ENCODE measurements at regions of chr16 and their contacts with region 1.

Region 1: DNA sequence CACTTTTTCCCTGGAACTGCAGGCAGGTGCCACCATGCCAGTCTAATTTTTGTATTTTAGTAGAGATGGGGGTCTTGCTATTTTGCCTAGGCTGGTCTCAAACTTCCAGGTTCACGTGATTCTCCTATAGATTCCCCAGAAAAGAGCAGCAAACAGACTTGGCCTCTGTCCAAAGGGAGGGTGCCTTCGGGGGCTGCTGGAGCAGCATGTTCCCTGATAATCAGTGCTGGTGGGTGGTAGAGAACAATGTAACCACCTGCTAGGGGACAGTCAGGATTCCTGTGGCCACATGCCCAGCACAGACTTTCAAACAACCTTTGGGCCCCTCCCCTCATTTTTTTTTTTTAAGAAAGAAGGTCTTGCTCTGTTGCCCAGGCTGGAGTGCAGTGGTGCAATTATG is 14.2 kb upstream of the CCNF start:
- DNase-seq: no peak
- ATAC-seq: no peak
- H3K4me3 ChIP-seq: no peak overlapping the region
- H3K27ac ChIP-seq: no peak overlapping the region
- H3K4me1 ChIP-seq: no peaks in the 10 kb centered on the region
- H3K27me3 ChIP-seq: peaks cover 0 to 30% (median 6%) of the 10 kb centered on the region in 9 donors
- CTCF ChIP-seq: no peak
- POLR2A ChIP-seq: no peak

Region 2: GRCh38 chr16:2071454-2072202 is 343.5 kb before region 1 on chr16:
- intact Hi-C with region 1: no loop called
- DNase-seq: no peak
- ATAC-seq: peak in 3 of 4 donors; percentile 3 to 16 (median 16)
- H3K4me3 ChIP-seq: no peak overlapping the region
- H3K27ac ChIP-seq: no peak overlapping the region
- H3K4me1 ChIP-seq: no peaks in the 10 kb centered on the region
- H3K27me3 ChIP-seq: no peaks in the 10 kb centered on the region
- CTCF ChIP-seq: no peak
- POLR2A ChIP-seq: no peak

Region 3: DNA sequence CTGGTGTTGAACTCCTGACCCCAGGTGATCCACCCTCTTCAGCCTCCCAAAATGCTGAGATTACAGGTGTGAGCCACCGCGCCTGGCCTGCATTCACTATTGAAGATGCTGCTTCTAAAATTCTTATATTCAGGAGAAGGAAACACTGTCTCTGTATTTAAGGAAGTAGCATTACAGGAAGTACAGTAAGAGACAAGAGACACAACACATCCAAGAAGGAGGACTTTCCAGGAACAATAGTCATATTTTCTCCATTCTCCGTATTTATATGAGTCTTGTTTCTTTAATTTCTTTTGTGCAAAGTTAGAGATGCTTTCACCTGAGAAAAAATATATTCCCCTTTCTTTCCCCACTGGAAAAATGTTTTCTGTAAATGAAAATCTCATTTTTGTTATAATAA is 56.3 kb before region 1 on chr16:
- intact Hi-C with region 1: loop called in 1 of 10 experiments (anchors 5 kb)
- DNase-seq: no peak
- ATAC-seq: no peak
- H3K4me3 ChIP-seq: no peak overlapping the region
- H3K27ac ChIP-seq: no peak overlapping the region
- H3K4me1 ChIP-seq: no peaks in the 10 kb centered on the region
- H3K27me3 ChIP-seq: peaks cover 0 to 17% (median 0%) of the 10 kb centered on the region in 9 donors
- CTCF ChIP-seq: no peak
- POLR2A ChIP-seq: no peak

Region 4: GRCh38 chr16:2447920-2448583 is 33.0 kb after region 1 on chr16:
- intact Hi-C with region 1: loop called in 1 of 10 experiments (anchors 2 kb)
- DNase-seq: no peak
- ATAC-seq: peak in 1 of 4 donors; percentile 48
- H3K4me3 ChIP-seq: no peak overlapping the region
- H3K27ac ChIP-seq: no peak overlapping the region
- H3K4me1 ChIP-seq: no peaks in the 10 kb centered on the region
- H3K27me3 ChIP-seq: no peaks in the 10 kb centered on the region
- CTCF ChIP-seq: no peak
- POLR2A ChIP-seq: no peak

Region 5: GRCh38 chr16:2595393-2596205 is 180.5 kb after region 1 on chr16:
- intact Hi-C with region 1: no loop called
- DNase-seq: peak in 1 of 5 donors; percentile 4
- ATAC-seq: no peak
- H3K4me3 ChIP-seq: no peak overlapping the region
- H3K27ac ChIP-seq: no peak overlapping the region
- H3K4me1 ChIP-seq: peaks cover 0 to 15% (median 0%) of the 10 kb centered on the region in 12 donors
- H3K27me3 ChIP-seq: no peaks in the 10 kb centered on the region
- CTCF ChIP-seq: no peak
- POLR2A ChIP-seq: no peak

Measured in heart left ventricle (tissue), 16 donors.